ENCODE measurements at regions of chr2 and their contacts with region 1.

Region 1: GRCh38 chr2:175414882-175415487 is 233.5 kb upstream of the ATP5MC3 start:
- DNase-seq: peak; percentile 87
- H3K4me3 Mint-ChIP-seq: no peak overlapping the region
- H3K27ac Mint-ChIP-seq: no peak overlapping the region
- H3K4me1 Mint-ChIP-seq: peaks cover 6% of the 10 kb centered on the region
- H3K27me3 Mint-ChIP-seq: no peaks in the 10 kb centered on the region
- CTCF ChIP-seq: peak; percentile 66

Region 2: DNA sequence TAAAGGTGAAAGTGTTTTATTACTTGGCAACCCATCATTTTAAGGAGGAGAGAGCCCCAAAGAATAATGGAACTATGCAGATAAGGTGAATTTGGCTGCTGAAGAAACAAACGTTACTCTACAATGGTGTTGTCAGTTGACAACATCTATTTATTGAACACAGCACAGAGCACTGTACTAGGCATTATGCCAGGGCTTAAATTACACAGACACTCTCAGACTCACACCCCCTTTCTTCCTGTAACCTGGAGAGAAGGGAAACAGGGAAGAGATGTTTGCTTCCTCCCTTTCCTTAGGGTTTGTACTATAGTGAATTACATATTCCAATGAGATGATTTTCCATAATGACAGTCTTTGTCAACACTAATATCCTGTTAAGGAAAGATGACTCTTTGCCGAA is 139.4 kb before region 1 on chr2:
- CTCF ChIA-PET with region 1: no interaction called
- POLR2A ChIA-PET with region 1: no interaction called
- intact Hi-C with region 1: no loop called
- DNase-seq: no peak
- H3K4me3 Mint-ChIP-seq: no peak overlapping the region
- H3K27ac Mint-ChIP-seq: no peak overlapping the region
- H3K4me1 Mint-ChIP-seq: no peaks in the 10 kb centered on the region
- H3K27me3 Mint-ChIP-seq: peaks cover 86% of the 10 kb centered on the region
- CTCF ChIP-seq: no peak

Region 3: GRCh38 chr2:175684457-175684856 is 269.5 kb after region 1 on chr2:
- CTCF ChIA-PET with region 1: interaction called, 4 read pairs
- POLR2A ChIA-PET with region 1: no interaction called
- intact Hi-C with region 1: loop called (anchors 2 kb)
- DNase-seq: no peak
- H3K4me3 Mint-ChIP-seq: no peak overlapping the region
- H3K27ac Mint-ChIP-seq: no peak overlapping the region
- H3K4me1 Mint-ChIP-seq: no peaks in the 10 kb centered on the region
- H3K27me3 Mint-ChIP-seq: peaks cover 56% of the 10 kb centered on the region
- CTCF ChIP-seq: no peak

Region 4: GRCh38 chr2:176317199-176317598 is 902.2 kb after region 1 on chr2:
- CTCF ChIA-PET with region 1: no interaction called
- POLR2A ChIA-PET with region 1: no interaction called
- intact Hi-C with region 1: no loop called
- DNase-seq: no peak
- H3K4me3 Mint-ChIP-seq: no peak overlapping the region
- H3K27ac Mint-ChIP-seq: no peak overlapping the region
- H3K4me1 Mint-ChIP-seq: no peaks in the 10 kb centered on the region
- H3K27me3 Mint-ChIP-seq: no peaks in the 10 kb centered on the region
- CTCF ChIP-seq: no peak